Posterior cingulate gyrus (tissue), 11 donors: ENCODE measurements at regions of chr1 and their contacts with region 1.

Region 1: DNA sequence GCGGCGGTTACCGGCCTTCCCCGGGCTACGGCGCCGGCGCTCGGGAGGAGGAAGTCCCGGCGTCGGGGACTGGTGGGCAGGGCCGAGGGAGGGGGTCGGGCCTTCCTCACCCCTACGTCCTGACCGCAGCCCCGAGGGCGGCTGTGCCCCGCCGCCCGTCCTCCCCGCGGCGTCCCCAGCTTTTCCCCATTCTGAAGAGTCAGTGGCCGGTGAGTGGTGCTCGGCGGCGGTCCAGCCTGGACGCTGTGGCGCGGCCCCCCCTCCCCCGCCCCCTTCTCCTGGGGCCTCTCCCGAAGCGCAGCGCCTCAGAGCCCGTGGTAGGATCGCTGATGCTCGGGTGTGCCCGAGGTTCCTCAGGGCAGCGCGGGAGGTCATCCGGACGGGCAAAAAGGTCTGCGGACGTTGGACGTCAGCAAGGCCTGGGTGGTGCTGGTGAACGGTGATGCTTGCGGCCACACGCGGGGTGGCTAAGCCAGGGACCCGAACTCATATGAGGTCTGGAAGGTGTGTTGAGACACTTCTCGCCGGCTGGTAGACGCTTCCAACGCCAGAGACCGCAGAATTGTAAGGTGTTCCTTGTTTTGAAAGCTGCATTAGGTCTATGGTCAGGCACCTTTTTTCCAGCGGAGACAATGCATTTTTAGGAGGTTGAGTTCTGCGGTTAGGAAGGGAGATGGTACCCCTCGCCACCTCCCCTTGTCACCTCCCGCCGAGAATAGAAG is 725 bp downstream of the SLC25A33 start:
- DNase-seq: peak in 8 of 10 donors; percentile 16 to 90 (median 38)

Region 2: GRCh38 chr1:9588551-9589143 is 48.7 kb after region 1 on chr1 and contains the start of gene TMEM201:
- intact Hi-C with region 1: loop called (anchors 2 kb)
- DNase-seq: peak; percentile 85 to 99 (median 92)